ENCODE measurements at regions of chr1 and their contacts with region 1.

Region 1: DNA sequence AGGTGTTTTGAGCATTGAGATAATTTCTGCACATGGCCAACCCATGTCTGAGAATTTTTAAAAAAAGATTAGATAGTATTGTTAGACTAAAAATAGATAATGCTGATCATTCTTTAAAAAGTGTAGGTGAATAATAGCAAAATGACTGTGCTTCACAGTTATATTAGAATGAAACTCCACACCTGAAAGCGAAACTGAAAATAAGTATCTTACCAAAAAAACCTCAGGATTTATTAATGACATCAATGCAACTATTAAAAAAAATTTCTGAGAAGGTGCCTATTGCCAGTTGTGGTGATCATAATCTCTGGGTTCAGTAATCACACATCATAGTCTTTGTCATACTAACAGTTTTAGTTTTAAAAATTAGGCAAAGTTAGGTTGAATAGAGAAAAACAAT is 36.5 kb downstream of the PLA2G4A start:
- DNase-seq: no peak
- H3K4me3 Mint-ChIP-seq: no peak overlapping the region
- H3K27ac Mint-ChIP-seq: no peak overlapping the region
- H3K4me1 Mint-ChIP-seq: peaks cover 6% of the 10 kb centered on the region
- H3K27me3 Mint-ChIP-seq: peaks cover 3% of the 10 kb centered on the region

Region 2: DNA sequence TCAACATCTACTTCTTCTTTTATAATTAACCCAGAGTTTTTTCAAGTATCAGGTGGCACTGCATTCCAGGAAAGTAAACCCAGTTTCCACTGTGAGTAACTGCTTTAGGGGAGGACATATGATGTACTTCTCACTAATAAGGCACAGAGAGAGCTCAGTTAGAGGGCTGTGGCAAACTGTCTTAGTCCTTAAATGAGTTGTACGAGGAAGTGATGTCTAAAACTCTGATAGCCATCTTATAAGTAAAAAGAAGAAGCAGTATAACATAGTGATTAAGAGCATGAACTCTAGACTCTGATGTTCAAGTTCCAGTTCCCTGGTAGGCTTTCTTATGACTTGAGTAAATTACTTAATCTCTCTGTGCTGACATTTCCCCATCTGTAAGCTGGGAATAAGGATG is 126.3 kb before region 1 on chr1:
- CTCF ChIA-PET with region 1: no interaction called
- intact Hi-C with region 1: loop called (anchors 5 kb)
- DNase-seq: peak; percentile 31
- H3K4me3 Mint-ChIP-seq: no peak overlapping the region
- H3K27ac Mint-ChIP-seq: peak overlapping the region; percentile 11
- H3K4me1 Mint-ChIP-seq: peaks cover 14% of the 10 kb centered on the region
- H3K27me3 Mint-ChIP-seq: peaks cover 10% of the 10 kb centered on the region